Breast epithelium (tissue), 4 donors: ENCODE measurements at regions of chr17 and their contacts with region 1.

Region 1: DNA sequence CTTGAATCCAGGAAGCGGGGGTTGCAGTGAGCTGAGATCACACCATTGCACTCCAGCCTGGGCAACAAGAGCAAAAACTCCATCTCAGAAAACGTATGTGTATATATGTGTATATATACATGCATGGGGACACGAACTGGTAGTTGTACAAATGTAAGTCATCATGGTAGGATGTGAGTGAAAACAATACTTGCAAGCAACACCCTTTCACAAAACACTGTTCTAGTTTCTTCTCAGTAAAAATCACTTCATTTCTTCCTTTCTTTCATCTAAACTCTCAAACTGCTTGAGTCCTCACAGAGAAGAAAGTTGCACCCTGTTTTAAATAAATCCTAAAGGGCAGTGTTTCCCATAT is 51.8 kb downstream of the METTL16 start:
- DNase-seq: no peak
- H3K4me3 ChIP-seq: no peak overlapping the region
- H3K27ac ChIP-seq: peak overlapping the region; percentile 74 to 75
- H3K4me1 ChIP-seq: no peaks in the 10 kb centered on the region
- H3K27me3 ChIP-seq: no peaks in the 10 kb centered on the region
- CTCF ChIP-seq: no peak
- POLR2A ChIP-seq: no peak

Region 2: GRCh38 chr17:3710951-3711383 is 1251.1 kb after region 1 on chr17:
- intact Hi-C with region 1: loop called (anchors 5 kb)
- DNase-seq: no peak
- H3K4me3 ChIP-seq: no peak overlapping the region
- H3K27ac ChIP-seq: no peak overlapping the region
- H3K4me1 ChIP-seq: no peaks in the 10 kb centered on the region
- H3K27me3 ChIP-seq: no peaks in the 10 kb centered on the region
- CTCF ChIP-seq: no peak
- POLR2A ChIP-seq: no peak